ENCODE measurements at regions of chr7 and their contacts with region 1.

Region 1: GRCh38 chr7:152894273-152895170 is 135.0 kb downstream of the ACTR3B start:
- DNase-seq: no peak
- ATAC-seq: peak; percentile 86
- H3K4me3 ChIP-seq: no peak overlapping the region
- H3K27ac ChIP-seq: no peak overlapping the region
- H3K4me1 ChIP-seq: no peaks in the 10 kb centered on the region
- H3K27me3 ChIP-seq: no peaks in the 10 kb centered on the region
- CTCF ChIP-seq: peak; percentile 56
- POLR2A ChIP-seq: no peak
- RAD21 ChIP-seq: peak; percentile 68

Region 2: DNA sequence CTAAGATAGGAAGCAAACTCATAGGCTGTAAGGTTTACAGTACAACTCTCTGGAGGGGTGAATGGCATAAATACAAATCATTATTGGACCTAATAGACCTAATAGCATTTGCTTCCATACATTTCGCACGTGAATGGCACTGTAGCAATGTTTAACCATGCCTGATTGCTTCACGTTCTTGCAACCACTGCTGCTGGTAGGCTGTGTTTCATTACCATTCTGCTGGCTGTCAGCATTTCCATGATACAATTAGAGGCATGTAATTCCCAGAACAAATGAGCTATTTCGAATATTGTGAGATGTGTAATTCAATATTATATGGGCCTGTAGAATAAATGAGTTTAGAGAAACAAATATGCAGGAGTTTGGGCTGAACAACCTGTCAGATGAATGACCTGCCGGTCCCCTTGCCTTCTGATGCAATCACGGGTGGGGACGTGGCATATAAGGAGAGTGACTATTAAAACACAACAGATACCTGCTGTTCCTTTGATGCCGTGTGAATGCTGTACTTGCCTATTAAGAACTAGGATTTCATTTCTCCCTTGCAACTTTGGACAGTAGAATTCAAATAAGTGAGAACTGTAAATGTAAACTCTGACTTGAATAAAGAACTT is 258.4 kb after region 1 on chr7:
- CTCF ChIA-PET with region 1: no interaction called
- POLR2A ChIA-PET with region 1: no interaction called
- dilution Hi-C with region 1: no loop called
- in situ Hi-C with region 1: no loop called
- intact Hi-C with region 1: no loop called
- DNase-seq: no peak
- ATAC-seq: no peak
- H3K4me3 ChIP-seq: no peak overlapping the region
- H3K27ac ChIP-seq: no peak overlapping the region
- H3K4me1 ChIP-seq: no peaks in the 10 kb centered on the region
- H3K27me3 ChIP-seq: no peaks in the 10 kb centered on the region
- CTCF ChIP-seq: no peak
- POLR2A ChIP-seq: no peak
- RAD21 ChIP-seq: no peak

Region 3: GRCh38 chr7:154503962-154504550 is 1609.5 kb after region 1 on chr7:
- CTCF ChIA-PET with region 1: no interaction called
- POLR2A ChIA-PET with region 1: no interaction called
- dilution Hi-C with region 1: no loop called
- in situ Hi-C with region 1: no loop called
- intact Hi-C with region 1: loop called (anchors 2 kb)
- DNase-seq: peak; percentile 21
- ATAC-seq: no peak
- H3K4me3 ChIP-seq: no peak overlapping the region
- H3K27ac ChIP-seq: no peak overlapping the region
- H3K4me1 ChIP-seq: no peaks in the 10 kb centered on the region
- H3K27me3 ChIP-seq: no peaks in the 10 kb centered on the region
- CTCF ChIP-seq: peak; percentile 37; the same call in 1 of the 2 replicates
- POLR2A ChIP-seq: no peak
- RAD21 ChIP-seq: no peak